Naive thymus-derived CD4-positive, alpha-beta T cell (primary cell): ENCODE measurements at regions of chr14 and their contacts with region 1.

Region 1: GRCh38 chr14:20855652-20856291 is 35.4 kb upstream of the RNASE3 start:
- DNase-seq: peak in 7 of 9 donors; percentile 25 to 64 (median 47)
- ATAC-seq: peak; percentile 89
- H3K4me3 ChIP-seq: no peak overlapping the region
- H3K4me3 Mint-ChIP-seq: no peak overlapping the region
- H3K27ac ChIP-seq: no peak overlapping the region
- H3K27ac Mint-ChIP-seq: no peak overlapping the region
- H3K4me1 ChIP-seq: no peaks in the 10 kb centered on the region
- H3K4me1 Mint-ChIP-seq: peaks cover 0 to 7% (median 0%) of the 10 kb centered on the region in 7 donors
- H3K27me3 ChIP-seq: no peaks in the 10 kb centered on the region
- H3K27me3 Mint-ChIP-seq: peaks cover 13 to 35% (median 28%) of the 10 kb centered on the region in 5 donors

Region 2: GRCh38 chr14:20327005-20327869 is 528.5 kb before region 1 on chr14:
- CTCF ChIA-PET with region 1: no interaction called
- POLR2A ChIA-PET with region 1: no interaction called
- intact Hi-C with region 1: loop called in 1 of 2 experiments (anchors 5 kb)
- DNase-seq: peak in 7 of 9 donors; percentile 44 to 74 (median 66)
- ATAC-seq: peak; percentile 81
- H3K4me3 ChIP-seq: no peak overlapping the region
- H3K4me3 Mint-ChIP-seq: peak overlapping the region in 5 of 10 donors; percentile 2 to 52 (median 26)
- H3K27ac ChIP-seq: no peak overlapping the region
- H3K27ac Mint-ChIP-seq: peak overlapping the region; percentile 35 to 93 (median 66)
- H3K4me1 ChIP-seq: peaks cover 0 to 4% of the 10 kb centered on the region in 2 donors
- H3K4me1 Mint-ChIP-seq: peaks cover 9 to 42% (median 27%) of the 10 kb centered on the region in 7 donors
- H3K27me3 ChIP-seq: no peaks in the 10 kb centered on the region
- H3K27me3 Mint-ChIP-seq: no peaks in the 10 kb centered on the region

Region 3: DNA sequence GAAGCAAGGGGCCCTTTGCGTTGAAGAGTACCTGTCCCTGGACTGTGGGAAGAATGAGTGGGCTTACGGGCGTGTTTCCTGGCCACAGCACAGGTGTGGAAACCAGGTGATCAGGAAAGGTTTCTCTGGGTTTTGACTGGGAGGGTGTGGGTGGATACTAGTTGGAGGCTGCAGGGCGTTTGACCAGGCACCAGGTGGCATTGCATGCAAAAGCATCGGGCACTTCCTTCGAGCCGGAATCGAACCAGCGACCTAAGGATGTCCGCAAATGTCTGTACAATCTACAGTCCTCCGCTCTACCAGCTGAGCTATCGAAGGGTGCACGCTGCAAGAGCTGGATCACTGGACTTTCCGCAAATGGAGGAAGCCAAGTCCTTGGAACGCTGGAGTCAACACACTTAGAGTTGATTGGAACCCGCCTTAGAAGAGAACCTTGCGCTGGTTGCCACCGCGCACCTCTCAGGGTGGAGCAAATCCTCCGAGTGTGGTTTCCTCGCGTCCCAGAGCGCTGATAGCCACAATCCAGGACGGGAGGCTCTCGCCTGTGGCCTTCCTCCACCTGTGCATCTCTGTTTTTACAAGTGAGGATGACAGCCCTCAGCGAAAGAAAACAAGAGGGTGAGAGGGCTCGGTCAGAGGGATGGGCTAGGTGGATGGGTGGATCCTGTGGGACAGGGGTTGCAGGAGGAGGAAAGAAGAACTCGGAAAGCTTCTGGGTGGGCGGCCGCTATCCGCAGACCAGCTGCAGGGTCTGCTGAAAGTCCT is 192.6 kb before region 1 on chr14:
- CTCF ChIA-PET with region 1: no interaction called
- POLR2A ChIA-PET with region 1: no interaction called
- intact Hi-C with region 1: loop called in 1 of 2 experiments (anchors 1 kb)
- DNase-seq: peak; percentile 49 to 77 (median 66)
- ATAC-seq: peak; percentile 91
- H3K4me3 ChIP-seq: peak overlapping the region; percentile 59
- H3K4me3 Mint-ChIP-seq: peak overlapping the region; percentile 72 to 86 (median 79)
- H3K27ac ChIP-seq: no peak overlapping the region
- H3K27ac Mint-ChIP-seq: peak overlapping the region in 8 of 9 donors; percentile 18 to 74 (median 39)
- H3K4me1 ChIP-seq: peaks cover 3 to 17% of the 10 kb centered on the region in 2 donors
- H3K4me1 Mint-ChIP-seq: peaks cover 23 to 53% (median 25%) of the 10 kb centered on the region in 7 donors
- H3K27me3 ChIP-seq: no peaks in the 10 kb centered on the region
- H3K27me3 Mint-ChIP-seq: peaks cover 5 to 23% (median 19%) of the 10 kb centered on the region in 5 donors

Region 4: GRCh38 chr14:20697273-20698017 is 158.3 kb before region 1 on chr14:
- CTCF ChIA-PET with region 1: interaction called, 19 read pairs
- POLR2A ChIA-PET with region 1: no interaction called
- intact Hi-C with region 1: loop called (anchors 1 kb)
- DNase-seq: peak; percentile 36 to 67 (median 57)
- ATAC-seq: peak; percentile 89
- H3K4me3 ChIP-seq: no peak overlapping the region
- H3K4me3 Mint-ChIP-seq: no peak overlapping the region
- H3K27ac ChIP-seq: no peak overlapping the region
- H3K27ac Mint-ChIP-seq: no peak overlapping the region
- H3K4me1 ChIP-seq: no peaks in the 10 kb centered on the region
- H3K4me1 Mint-ChIP-seq: peaks cover 0 to 1% (median 0%) of the 10 kb centered on the region in 7 donors
- H3K27me3 ChIP-seq: no peaks in the 10 kb centered on the region
- H3K27me3 Mint-ChIP-seq: peaks cover 0 to 15% (median 0%) of the 10 kb centered on the region in 5 donors

Region 5: GRCh38 chr14:20757965-20758364 is 97.8 kb before region 1 on chr14:
- CTCF ChIA-PET with region 1: interaction called, 3 read pairs
- POLR2A ChIA-PET with region 1: no interaction called
- intact Hi-C with region 1: loop called (anchors 1 kb)
- DNase-seq: peak in 5 of 9 donors; percentile 11 to 37 (median 31)
- ATAC-seq: no peak
- H3K4me3 ChIP-seq: no peak overlapping the region
- H3K4me3 Mint-ChIP-seq: no peak overlapping the region
- H3K27ac ChIP-seq: no peak overlapping the region
- H3K27ac Mint-ChIP-seq: peak overlapping the region in 1 of 9 donors; percentile 3
- H3K4me1 ChIP-seq: no peaks in the 10 kb centered on the region
- H3K4me1 Mint-ChIP-seq: no peaks in the 10 kb centered on the region
- H3K27me3 ChIP-seq: no peaks in the 10 kb centered on the region
- H3K27me3 Mint-ChIP-seq: peaks cover 0 to 6% (median 0%) of the 10 kb centered on the region in 5 donors

Region 6: GRCh38 chr14:20873370-20874177 is 17.8 kb after region 1 on chr14:
- CTCF ChIA-PET with region 1: interaction called, 8 read pairs
- POLR2A ChIA-PET with region 1: no interaction called
- intact Hi-C with region 1: loop called (anchors 1 kb)
- DNase-seq: peak; percentile 42 to 76 (median 69)
- ATAC-seq: peak; percentile 87
- H3K4me3 ChIP-seq: no peak overlapping the region
- H3K4me3 Mint-ChIP-seq: peak overlapping the region in 8 of 10 donors; percentile 18 to 62 (median 45)
- H3K27ac ChIP-seq: no peak overlapping the region
- H3K27ac Mint-ChIP-seq: peak overlapping the region in 2 of 9 donors; percentile 57 to 68
- H3K4me1 ChIP-seq: peaks cover 0 to 6% of the 10 kb centered on the region in 2 donors
- H3K4me1 Mint-ChIP-seq: peaks cover 10 to 14% (median 13%) of the 10 kb centered on the region in 7 donors
- H3K27me3 ChIP-seq: peaks cover 0 to 4% of the 10 kb centered on the region in 2 donors
- H3K27me3 Mint-ChIP-seq: peaks cover 0 to 34% (median 10%) of the 10 kb centered on the region in 5 donors

Region 7: GRCh38 chr14:21039585-21040369 is 184.0 kb after region 1 on chr14:
- CTCF ChIA-PET with region 1: no interaction called
- POLR2A ChIA-PET with region 1: no interaction called
- intact Hi-C with region 1: loop called in 1 of 2 experiments (anchors 1 kb)
- DNase-seq: peak in 7 of 9 donors; percentile 17 to 55 (median 46)
- ATAC-seq: peak; percentile 69
- H3K4me3 ChIP-seq: no peak overlapping the region
- H3K4me3 Mint-ChIP-seq: no peak overlapping the region
- H3K27ac ChIP-seq: no peak overlapping the region
- H3K27ac Mint-ChIP-seq: no peak overlapping the region
- H3K4me1 ChIP-seq: no peaks in the 10 kb centered on the region
- H3K4me1 Mint-ChIP-seq: peaks cover 2 to 9% (median 8%) of the 10 kb centered on the region in 7 donors
- H3K27me3 ChIP-seq: no peaks in the 10 kb centered on the region
- H3K27me3 Mint-ChIP-seq: peaks cover 3 to 31% (median 11%) of the 10 kb centered on the region in 5 donors